ENCODE measurements at regions of chr10 and their contacts with region 1.

Region 1: DNA sequence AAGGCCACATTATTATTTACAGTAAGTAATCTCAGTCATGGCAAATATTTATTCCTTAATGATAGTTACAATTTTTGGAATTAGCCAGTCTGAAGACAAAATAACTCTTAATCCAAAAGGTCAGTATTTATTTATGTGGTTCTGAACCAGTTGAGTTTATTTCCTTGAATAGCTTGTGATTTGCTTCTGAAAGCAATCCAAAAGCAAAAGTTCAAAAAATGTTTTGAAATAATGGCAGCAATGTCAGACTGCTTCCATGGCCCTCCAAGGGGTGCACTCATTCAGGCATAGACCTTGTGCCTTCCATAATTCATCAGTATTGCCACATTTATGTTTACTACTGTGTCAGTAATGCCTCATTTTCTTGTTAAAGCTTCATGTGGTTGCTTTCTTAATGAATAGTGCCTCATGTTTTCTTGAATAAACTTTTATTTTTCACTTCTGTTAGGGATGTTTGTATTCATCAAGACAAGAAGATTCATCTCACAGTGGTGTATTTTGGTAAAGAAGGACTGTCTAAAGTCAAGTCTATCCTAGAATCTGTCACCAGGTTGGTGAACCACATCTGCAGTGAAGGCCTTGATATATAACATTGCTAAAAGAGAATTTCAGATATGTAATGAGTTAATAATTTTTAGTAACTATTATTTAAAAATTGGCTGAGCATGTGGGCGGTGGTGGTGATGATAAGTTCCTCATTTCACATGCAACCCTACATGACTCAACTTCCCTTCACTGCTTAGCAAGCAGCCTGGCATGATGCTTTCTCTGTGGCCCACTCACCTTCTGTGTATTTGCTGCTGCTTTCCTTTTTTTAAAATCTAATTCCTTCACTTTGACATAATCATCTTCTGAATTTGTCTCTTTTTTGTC is 22.0 kb downstream of the CSGALNACT2 start:
- H3K4me3 Mint-ChIP-seq: peak overlapping the region; percentile 30
- H3K27ac Mint-ChIP-seq: peak overlapping the region; percentile 80
- H3K4me1 Mint-ChIP-seq: peaks cover 60% of the 10 kb centered on the region
- H3K27me3 Mint-ChIP-seq: no peaks in the 10 kb centered on the region

Region 2: GRCh38 chr10:42801135-42801534 is 359.1 kb before region 1 on chr10:
- intact Hi-C with region 1: loop called (anchors 10 kb)
- H3K4me3 Mint-ChIP-seq: no peak overlapping the region
- H3K27ac Mint-ChIP-seq: no peak overlapping the region
- H3K4me1 Mint-ChIP-seq: no peaks in the 10 kb centered on the region
- H3K27me3 Mint-ChIP-seq: no peaks in the 10 kb centered on the region

Region 3: DNA sequence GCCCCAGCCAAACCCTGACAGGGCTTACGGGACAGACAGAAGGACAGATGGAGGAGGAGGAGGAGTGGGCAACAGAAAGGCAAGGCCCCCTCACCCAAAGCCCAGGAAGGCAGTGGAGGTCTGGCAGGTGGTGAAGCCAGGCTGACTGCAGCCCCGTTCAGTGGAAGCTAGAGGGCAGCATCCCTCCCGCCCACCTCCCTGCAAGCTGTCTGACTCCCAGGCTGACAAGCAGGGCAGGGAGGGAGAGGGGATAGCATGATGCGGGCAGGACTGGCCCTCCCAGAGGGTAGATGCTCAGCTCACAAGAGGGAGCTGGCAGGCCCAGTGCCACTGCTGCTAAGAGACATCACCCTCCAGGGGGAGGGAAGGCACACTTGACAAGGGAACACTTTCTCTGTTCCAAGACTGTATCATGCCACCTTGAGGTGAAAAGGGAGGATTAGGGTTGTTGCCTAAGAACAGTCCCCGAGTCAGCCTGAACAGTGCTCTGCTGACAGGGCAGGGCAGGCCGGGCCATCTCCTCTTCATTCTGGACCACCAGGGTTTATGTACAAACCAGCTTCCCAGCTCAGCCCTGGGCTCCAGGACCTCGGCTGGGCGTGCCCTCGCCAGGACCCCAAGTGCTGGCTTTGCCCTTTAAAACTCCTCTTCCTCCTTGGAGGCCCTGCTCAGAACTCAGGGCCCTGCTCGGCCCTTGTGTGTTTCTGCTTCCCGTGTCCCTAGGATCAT is 44.8 kb after region 1 on chr10:
- intact Hi-C with region 1: no loop called
- H3K4me3 Mint-ChIP-seq: no peak overlapping the region
- H3K27ac Mint-ChIP-seq: no peak overlapping the region
- H3K4me1 Mint-ChIP-seq: peaks cover 27% of the 10 kb centered on the region
- H3K27me3 Mint-ChIP-seq: no peaks in the 10 kb centered on the region

Region 4: DNA sequence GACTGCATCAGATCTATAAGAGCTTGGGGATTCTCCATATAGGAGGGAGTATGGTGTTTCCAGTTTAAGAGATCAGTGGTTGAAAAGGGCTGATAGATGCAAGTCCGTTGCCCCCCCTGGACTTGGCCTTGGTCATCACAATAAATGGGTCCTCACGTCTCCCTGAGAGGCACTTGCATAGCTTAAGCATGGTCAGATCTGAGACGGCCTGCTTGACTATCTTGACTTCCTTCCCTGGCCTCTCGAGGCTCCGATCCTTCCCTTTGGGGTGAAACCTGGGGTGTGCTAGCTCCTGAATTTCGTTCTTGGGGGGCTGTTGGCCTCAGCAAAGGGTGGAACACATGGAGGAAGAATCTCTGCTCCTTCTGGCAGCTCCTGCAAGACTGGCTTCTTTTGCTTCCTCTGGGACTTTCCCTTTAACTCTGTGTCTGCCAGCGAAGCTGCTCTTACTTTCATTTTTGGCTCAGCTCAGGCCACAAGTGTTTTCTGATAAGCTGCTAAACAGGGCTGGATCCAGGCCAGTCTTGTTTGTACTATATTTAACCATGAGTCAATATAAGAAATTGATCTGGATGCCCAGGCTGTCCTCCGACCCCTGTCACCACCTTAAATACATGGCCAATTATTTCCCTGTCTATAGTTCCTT is 434.8 kb after region 1 on chr10:
- intact Hi-C with region 1: no loop called
- H3K4me3 Mint-ChIP-seq: peak overlapping the region; percentile 66
- H3K27ac Mint-ChIP-seq: peak overlapping the region; percentile 83
- H3K4me1 Mint-ChIP-seq: peaks cover 34% of the 10 kb centered on the region
- H3K27me3 Mint-ChIP-seq: peaks cover 2% of the 10 kb centered on the region

Measured in dendritic cell treated with granulocyte-macrophage colony-stimulating factor and Interleukin-4, amounts not matched to agents 40 ng/mL and 50 ng/mL, for 4 days (primary cell).